ENCODE measurements at regions of chr4 and their contacts with region 1.

Region 1: GRCh38 chr4:115165503-115165902 is 52.1 kb upstream of the NDST4 start:
- DNase-seq: peak; percentile 4
- H3K4me3 ChIP-seq: no peak overlapping the region
- CTCF ChIP-seq: no peak

Region 2: DNA sequence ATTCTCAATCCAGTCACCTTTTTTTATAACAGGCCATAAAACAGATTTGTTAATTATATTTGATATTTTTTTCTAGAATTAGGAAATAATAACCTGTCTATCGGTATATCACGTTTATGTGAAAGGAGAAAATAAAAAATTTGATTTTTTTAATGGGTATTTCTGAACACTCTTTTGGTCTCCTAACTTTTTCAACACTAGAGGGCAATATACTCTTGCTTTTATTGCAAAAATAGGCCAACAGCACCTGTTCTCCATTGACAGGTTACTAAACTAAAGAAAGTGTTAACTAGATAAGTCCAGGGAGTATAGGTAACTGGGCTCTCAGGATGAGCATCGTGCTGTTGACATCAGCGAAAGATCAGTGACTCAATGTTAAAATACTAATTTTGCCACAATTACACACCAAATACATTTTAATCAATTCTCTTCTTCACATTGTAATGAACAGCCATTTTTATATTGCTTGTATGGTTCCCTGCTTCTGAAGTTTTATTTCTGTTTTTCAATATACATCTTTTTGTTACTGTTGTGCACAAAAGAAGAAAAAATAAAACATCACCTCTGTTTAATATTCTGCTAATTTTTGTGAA is 74.9 kb before region 1 on chr4:
- in situ Hi-C with region 1: loop called (anchors 5 kb)
- DNase-seq: peak; percentile 12
- H3K4me3 ChIP-seq: no peak overlapping the region
- CTCF ChIP-seq: peak; percentile 54

Region 3: DNA sequence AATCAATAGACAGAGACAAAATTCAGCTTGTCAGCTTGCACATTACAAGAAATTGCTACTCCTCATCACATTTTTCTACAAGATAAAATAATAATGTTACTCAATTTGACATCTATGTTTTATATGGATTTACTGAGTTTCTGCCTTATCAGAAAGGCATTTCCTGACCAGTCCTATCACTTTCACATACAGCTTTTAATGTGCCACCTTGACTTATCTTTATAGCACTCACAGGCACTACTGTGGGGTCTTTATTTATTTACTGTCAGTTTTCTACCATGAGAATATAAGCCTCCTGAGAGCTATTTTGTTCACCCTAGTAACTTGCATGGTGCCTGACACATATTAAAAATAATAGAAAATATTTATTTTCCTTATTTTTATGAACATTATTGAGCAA is 58.1 kb before region 1 on chr4:
- in situ Hi-C with region 1: no loop called
- DNase-seq: no peak
- H3K4me3 ChIP-seq: no peak overlapping the region
- CTCF ChIP-seq: no peak